ENCODE measurements at regions of chr14 and their contacts with region 1.

Region 1: GRCh38 chr14:60656686-60657455 is 7.6 kb upstream of the SIX1 start:
- DNase-seq: peak; percentile 94
- H3K4me3 ChIP-seq: peak overlapping the region; percentile 70
- H3K27ac ChIP-seq: peak overlapping the region; percentile 68
- H3K4me1 ChIP-seq: peaks cover 37% of the 10 kb centered on the region
- CTCF ChIP-seq: peak; percentile 81

Region 2: GRCh38 chr14:60573943-60574495 is 82.9 kb before region 1 on chr14:
- CTCF ChIA-PET with region 1: no interaction called
- POLR2A ChIA-PET with region 1: no interaction called
- intact Hi-C with region 1: no loop called
- DNase-seq: no peak
- H3K4me3 ChIP-seq: no peak overlapping the region
- H3K27ac ChIP-seq: no peak overlapping the region
- H3K4me1 ChIP-seq: no peaks in the 10 kb centered on the region
- CTCF ChIP-seq: no peak

Region 3: GRCh38 chr14:60980811-60981632 is 324.2 kb after region 1 on chr14 and contains the starts of genes SLC38A6 and TRMT5:
- CTCF ChIA-PET with region 1: no interaction called
- POLR2A ChIA-PET with region 1: interaction called, 3 read pairs
- intact Hi-C with region 1: loop called (anchors 1 kb)
- DNase-seq: peak; percentile 88
- H3K4me3 ChIP-seq: peak within 1 kb of the TSS; percentile 81
- H3K27ac ChIP-seq: peak within 1 kb of the TSS; percentile 38
- H3K4me1 ChIP-seq: peaks cover 41% of the 10 kb centered on the region
- CTCF ChIP-seq: no peak
- total RNA-seq, gene SLC38A6: 12.9 and 16.8 TPM in 2 replicates
- total RNA-seq, gene TRMT5: 7.0 and 17.6 TPM in 2 replicates

Region 4: GRCh38 chr14:61025251-61026223 is 368.7 kb after region 1 on chr14:
- CTCF ChIA-PET with region 1: interaction called, 3 read pairs
- POLR2A ChIA-PET with region 1: interaction called, 6 read pairs
- intact Hi-C with region 1: loop called (anchors 1 kb)
- DNase-seq: peak; percentile 81
- H3K4me3 ChIP-seq: no peak overlapping the region
- H3K27ac ChIP-seq: no peak overlapping the region
- H3K4me1 ChIP-seq: peaks cover 20% of the 10 kb centered on the region
- CTCF ChIP-seq: peak; percentile 99

Measured in OCI-LY7 (cell line).